Left colon (tissue), 2 donors: ENCODE measurements at regions of chr6 and their contacts with region 1.

Region 1: GRCh38 chr6:47242483-47243386 is 67.0 kb downstream of the TNFRSF21 start:
- DNase-seq: peak; percentile 91 to 95
- ATAC-seq: peak; percentile 98

Region 2: DNA sequence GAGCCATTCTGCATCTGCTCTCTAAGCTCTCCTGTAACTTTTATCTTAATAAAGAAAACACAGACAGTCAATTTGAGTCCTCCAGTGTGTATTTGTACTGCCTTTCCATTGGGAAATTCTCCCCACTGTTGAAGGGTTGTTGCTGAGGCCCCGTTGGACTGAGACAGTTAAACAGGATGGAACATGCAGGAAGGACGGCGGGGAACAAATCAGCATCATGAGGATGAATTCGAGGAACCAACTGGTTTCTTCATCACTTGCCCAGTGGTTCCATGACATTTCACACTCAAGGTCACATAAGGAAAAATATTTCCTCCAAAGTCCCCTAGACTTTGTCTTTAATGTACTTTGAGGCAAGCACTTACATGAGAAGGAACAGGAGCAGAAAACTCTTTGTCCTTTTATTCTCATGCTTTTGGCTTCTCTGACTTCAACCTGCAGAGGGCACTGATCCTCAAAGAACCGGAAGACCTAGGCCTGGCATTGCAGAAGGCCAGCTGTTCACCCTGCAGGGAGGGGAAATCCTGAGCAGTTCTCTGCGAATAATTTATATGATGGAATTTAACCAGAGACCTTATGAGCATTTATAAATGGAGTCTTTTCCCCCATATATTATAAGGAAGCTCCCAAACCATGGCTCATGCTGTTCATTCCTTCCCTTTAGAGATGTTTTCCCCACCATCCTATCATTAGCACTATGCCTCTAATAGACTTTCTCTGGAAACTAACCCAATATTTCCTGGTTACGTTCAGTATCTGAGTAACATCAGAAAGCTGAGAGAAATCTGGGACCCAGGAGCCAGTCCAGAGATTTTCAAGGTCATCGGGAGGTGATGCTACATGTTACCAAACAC is 145.4 kb before region 1 on chr6:
- intact Hi-C with region 1: loop called in 1 of 2 experiments (anchors 10 kb)
- DNase-seq: peak; percentile 69 to 78
- ATAC-seq: peak; percentile 70

Region 3: GRCh38 chr6:47344022-47344421 is 101.3 kb after region 1 on chr6:
- intact Hi-C with region 1: no loop called
- DNase-seq: peak; percentile 38 to 69
- ATAC-seq: peak; percentile 50

Region 4: DNA sequence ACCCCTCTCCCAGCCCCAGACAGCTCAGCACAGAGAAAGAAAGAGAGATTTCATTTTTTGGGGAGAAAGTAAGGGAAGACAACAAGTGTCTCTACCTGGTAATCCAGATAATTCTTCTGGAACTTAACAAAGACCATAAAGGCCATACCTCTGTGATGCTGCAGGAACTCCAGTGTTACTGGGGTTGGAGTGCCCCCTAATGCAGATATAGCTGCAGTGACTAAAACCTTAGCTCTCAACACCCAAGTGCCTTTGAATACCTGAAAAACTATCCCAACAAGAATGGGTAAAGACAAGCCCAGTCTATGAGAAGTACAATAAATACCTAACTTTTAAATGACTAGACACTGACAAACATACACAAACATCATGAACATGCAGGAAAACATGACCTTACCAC is 1233.5 kb after region 1 on chr6:
- intact Hi-C with region 1: no loop called
- DNase-seq: peak in 1 of 2 donors; percentile 3
- ATAC-seq: no peak